GM13976 (cell line): ENCODE measurements at regions of chr2 and their contacts with region 1.

Region 1: GRCh38 chr2:152025678-152026287 is 73.1 kb downstream of the CACNB4 start:
- DNase-seq: peak; percentile 68
- CTCF ChIP-seq: peak; percentile 94

Region 2: GRCh38 chr2:152445791-152446201 is 420.0 kb after region 1 on chr2:
- in situ Hi-C with region 1: loop called (anchors 25 kb)
- DNase-seq: no peak
- CTCF ChIP-seq: no peak